Cardiac septum (tissue), 1 donor: ENCODE measurements at regions of chr12 and their contacts with region 1.

Region 1: DNA sequence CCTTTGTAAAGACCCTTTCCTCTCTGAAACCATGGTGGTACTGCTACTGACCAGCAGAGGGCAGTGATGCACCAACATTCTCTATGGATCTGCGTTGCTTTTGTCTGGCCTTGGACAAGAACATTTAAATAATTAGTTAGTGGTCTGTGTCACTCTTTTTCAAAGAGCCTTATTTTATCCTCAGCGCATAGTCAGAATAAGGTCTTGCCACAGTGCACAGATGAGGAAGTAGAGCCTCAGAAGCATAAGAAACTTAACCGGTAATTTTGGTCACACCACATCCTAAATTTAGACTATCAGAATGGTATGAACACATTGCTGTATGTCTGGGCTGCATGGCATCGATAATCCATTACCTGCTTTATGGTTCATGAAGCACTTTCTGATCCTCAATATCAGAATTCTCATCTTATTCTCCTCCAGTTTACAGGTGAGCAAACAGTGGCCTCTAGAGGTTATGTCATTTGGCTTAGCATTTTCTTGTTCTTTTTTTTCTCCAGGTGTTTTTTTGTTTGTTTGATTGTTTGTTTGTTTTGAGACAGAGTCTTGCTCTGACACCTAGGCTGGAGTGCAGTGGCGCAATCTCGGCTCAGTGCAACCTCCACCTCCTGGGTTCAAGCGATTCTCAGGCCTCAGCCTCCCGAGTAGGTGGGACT is 23.7 kb upstream of the IFT81 start:
- DNase-seq: no peak

Region 2: GRCh38 chr12:110245369-110245772 is 144.9 kb after region 1 on chr12:
- intact Hi-C with region 1: loop called (anchors 10 kb)
- DNase-seq: no peak

Region 3: GRCh38 chr12:110312581-110313360 is 212.3 kb after region 1 on chr12:
- intact Hi-C with region 1: loop called (anchors 10 kb)
- DNase-seq: no peak

Region 4: DNA sequence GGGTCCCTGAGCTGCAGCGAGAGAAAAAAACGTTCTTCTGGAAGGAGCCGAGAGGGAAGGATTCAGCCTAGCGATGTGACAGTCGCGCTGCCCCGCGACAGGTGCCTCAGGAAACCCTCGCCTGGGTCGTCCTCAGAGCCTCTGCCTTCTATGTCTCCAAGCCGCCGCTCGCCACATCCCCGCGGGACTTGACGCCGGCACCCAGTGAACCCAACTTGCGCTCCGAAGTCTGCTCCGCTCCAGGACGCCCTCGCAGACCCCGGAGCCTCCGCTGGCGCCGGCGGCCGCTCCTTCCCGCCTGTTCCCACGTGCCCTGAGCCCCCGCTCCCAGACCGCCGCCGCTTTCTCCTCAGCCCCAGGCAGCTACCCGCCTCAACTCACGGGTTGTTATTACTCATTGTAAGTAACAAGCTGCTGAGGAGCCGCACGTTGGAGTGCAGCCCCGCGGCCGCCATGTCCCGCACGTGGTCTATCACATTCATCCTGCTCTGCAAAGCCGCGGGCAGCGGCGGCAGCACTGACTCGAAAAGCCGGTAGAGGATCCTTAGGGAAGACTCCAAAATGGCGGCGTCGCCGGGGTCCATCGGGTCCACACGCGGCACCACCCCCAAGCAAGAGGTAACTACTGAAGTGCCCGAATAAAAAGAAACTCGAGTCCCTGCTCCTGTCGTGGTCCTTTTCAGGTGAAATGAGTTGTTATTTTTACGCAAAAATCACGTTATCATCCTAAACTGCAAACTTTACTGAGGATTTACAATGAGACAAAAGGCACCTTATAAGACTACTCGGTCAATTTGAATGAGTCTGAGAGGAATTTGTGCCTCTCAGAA is 302.9 kb after region 1 on chr12 and contains the start of gene ANAPC7:
- intact Hi-C with region 1: loop called (anchors 10 kb)
- DNase-seq: peak; percentile 94
- total RNA-seq, gene ANAPC7: 35.3 TPM

Region 5: GRCh38 chr12:110431957-110432587 is 331.6 kb after region 1 on chr12:
- intact Hi-C with region 1: loop called (anchors 1 kb)
- DNase-seq: no peak